AG04449 (cell line): ENCODE measurements at regions of chr2 and their contacts with region 1.

Region 1: DNA sequence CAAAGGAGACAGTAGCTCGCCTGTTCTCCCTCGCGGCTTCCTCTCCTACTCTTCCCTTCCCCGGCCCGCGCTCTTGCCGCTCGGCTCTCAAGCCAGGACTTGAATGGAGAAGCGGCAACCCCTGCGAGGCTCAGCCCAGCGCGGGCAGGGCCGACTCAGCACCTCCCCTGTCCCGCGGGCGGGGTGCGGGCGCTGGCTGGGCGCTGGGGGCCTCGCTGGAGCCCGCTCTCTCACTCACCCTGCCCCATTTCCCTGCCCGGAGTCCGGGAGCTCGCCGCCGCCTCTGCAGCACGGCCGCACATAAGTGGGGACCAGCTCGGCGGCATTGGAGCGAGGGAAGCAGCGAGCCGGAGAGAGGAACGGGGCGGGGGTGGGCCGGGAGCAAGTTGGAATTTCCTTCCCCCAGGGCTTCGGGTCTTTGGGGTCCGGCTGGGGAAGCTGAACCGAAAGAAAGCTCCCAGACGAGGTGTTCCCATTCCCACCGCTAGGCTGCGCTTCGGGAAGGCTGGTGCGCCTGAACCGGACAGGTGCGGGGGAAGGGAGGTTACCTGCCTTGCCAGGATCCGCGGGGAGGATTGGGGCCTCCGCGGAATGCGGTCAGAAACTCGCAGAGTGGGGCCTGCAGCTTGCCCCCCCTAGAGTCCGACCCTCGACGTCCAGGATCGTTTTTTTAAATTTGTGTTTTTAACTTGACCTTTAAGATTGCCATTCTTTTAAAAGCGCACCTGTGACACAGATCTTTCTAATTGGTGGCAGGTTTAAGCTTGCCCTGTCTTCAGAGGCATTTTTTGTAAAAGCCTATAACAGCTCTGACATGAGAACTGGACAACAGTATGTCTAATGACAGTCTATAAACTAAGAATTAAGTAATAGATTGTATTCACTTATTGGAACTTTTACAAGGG is at the start of gene COBLL1:
- DNase-seq: no peak
- H3K4me3 ChIP-seq: peak within 1 kb of the TSS; percentile 71
- CTCF ChIP-seq: peak; percentile 86

Region 2: DNA sequence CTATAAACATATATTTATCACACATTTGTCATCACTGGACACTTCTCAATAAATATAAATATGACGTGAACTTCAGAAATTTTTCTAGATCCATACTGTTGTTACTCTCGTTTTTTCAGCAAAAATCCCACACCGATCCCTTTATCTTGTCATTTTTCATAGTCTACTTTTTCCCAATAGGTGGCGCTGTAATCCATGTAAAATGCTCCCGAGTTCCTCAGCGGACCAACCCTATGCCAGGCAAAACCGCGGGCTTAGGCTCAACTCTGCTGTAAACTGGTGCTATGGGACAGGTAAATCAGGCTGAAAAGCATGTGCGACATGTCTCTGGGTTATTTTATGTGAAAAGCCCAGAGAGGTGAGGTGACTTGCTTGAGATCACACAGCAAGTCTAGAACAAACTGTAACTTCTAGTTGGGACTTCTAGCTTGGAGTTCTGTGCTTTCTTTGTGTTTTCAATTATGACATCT is 104.3 kb before region 1 on chr2:
- CTCF ChIA-PET with region 1: interaction called, 18 read pairs
- POLR2A ChIA-PET with region 1: interaction called, 3 read pairs
- DNase-seq: no peak
- H3K4me3 ChIP-seq: no peak overlapping the region
- CTCF ChIP-seq: peak; percentile 43

Region 3: DNA sequence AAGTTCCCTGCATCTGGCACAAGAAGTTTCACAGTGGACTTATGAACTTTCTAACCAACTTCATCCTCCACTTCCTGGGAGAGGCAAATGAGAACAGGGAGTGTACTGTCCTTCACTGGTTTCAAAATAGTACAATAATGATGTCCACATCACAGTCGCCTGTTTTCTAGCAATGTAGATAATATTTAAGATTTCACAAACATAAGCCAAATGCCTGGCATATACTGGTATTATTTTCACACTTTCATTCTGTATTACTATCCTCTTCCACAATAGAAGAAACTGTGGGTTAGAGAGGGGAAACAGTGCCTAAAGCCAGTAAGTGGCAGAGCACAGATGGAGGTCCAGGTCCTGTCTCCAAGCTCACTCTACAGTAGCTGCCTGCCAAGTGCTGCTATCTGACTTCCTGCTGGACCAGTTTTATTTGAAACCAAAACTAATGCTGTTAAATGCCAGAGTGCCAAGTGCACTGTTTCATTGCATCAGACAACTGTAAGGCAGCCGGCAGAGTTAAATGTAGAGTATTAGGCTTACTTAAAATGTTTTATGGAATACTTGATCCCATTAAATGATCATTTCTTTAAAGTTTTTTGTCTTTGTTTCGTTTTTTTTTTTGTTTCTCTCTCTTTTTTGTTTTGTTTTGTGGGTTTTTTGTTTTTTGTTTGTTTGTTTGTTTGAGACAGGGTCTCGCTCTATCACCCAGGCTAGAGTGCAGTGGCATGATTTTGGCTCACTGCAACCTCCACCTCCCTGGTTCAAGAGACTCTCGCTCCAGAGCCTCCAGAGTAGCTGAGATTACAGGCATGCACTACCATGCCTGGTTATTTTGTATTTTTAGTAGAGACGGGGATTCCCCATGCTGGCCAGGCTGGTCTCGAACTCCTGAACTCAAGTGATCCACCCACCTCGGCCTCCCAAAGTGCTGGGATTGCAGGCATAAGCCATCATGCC is 15.4 kb before region 1 on chr2:
- CTCF ChIA-PET with region 1: interaction called, 63 read pairs
- POLR2A ChIA-PET with region 1: no interaction called
- DNase-seq: no peak
- H3K4me3 ChIP-seq: no peak overlapping the region
- CTCF ChIP-seq: no peak

Region 4: DNA sequence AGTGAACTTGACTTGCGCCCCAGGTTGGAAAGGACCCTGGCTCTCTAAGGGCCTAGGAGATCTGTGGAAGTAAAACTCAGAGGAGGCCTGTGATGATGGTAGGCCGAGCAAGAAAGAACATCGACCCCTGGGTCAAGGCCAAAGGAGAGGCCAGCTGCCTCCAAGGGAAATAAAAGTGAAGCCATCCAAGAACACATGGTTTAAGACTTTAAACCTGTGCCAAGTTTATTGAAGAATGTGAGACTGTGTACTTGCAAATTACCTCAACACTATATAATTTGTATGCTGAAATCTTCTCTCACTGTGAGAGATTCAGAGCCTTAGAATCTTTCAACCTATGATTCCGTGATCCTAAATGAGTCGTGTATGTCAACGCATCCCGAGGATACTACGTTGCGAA is 40.3 kb after region 1 on chr2:
- CTCF ChIA-PET with region 1: interaction called, 14 read pairs
- POLR2A ChIA-PET with region 1: no interaction called
- DNase-seq: no peak
- H3K4me3 ChIP-seq: no peak overlapping the region
- CTCF ChIP-seq: no peak

Region 5: GRCh38 chr2:164896634-164897355 is 54.8 kb after region 1 on chr2:
- CTCF ChIA-PET with region 1: interaction called, 15 read pairs
- POLR2A ChIA-PET with region 1: no interaction called
- DNase-seq: peak; percentile 37
- H3K4me3 ChIP-seq: no peak overlapping the region
- CTCF ChIP-seq: no peak

Region 6: GRCh38 chr2:165161510-165161909 is 319.5 kb after region 1 on chr2:
- CTCF ChIA-PET with region 1: no interaction called
- POLR2A ChIA-PET with region 1: no interaction called
- DNase-seq: peak; percentile 33
- H3K4me3 ChIP-seq: no peak overlapping the region
- CTCF ChIP-seq: no peak